ENCODE measurements at regions of chr12 and their contacts with region 1.

Region 1: GRCh38 chr12:12736759-12737676 is 19.9 kb downstream of the CDKN1B start:
- DNase-seq: peak; percentile 55
- H3K4me3 Mint-ChIP-seq: no peak overlapping the region
- H3K27ac Mint-ChIP-seq: peak overlapping the region; percentile 71
- H3K4me1 Mint-ChIP-seq: peaks cover 24% of the 10 kb centered on the region
- H3K27me3 Mint-ChIP-seq: no peaks in the 10 kb centered on the region
- CTCF ChIP-seq: peak; percentile 52

Region 2: DNA sequence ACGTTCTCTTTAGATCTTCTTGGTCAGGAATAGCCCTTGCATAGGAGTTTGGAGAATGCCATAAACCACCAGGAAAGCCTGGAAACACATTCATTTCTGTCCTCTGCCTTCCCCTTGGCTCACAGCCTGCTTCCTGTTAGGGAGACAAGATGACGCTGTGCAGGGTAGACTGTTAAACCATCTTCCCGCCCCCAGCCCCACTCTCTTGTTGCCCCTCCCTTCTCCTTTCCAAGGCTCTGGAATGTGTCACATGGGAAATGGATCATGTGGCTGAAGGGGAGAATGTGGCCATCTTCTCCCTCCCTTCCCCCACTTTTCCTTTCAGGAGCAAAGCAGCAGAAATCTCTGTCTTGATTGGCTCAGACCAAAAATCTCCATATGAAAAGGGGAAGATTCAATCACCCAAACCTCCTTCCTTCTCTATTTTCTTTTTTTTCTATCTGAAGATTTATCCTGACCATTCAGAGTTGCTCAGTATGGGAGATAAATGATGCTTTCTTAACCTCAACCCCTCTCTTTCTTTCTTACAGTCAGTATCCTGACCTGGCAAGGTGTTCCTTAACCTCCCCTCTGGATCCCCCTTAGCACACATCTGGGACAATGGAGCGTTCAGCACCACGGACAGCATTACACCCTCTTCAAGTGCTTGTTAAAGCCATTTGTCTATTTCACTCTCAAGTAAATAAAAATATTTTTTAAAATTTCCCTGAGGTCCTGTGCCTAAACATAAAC is 52.5 kb before region 1 on chr12:
- CTCF ChIA-PET with region 1: no interaction called
- POLR2A ChIA-PET with region 1: no interaction called
- intact Hi-C with region 1: no loop called
- DNase-seq: peak; percentile 59
- H3K4me3 Mint-ChIP-seq: no peak overlapping the region
- H3K27ac Mint-ChIP-seq: no peak overlapping the region
- H3K4me1 Mint-ChIP-seq: no peaks in the 10 kb centered on the region
- H3K27me3 Mint-ChIP-seq: no peaks in the 10 kb centered on the region
- CTCF ChIP-seq: no peak

Region 3: GRCh38 chr12:12749433-12749832 is 12.4 kb after region 1 on chr12:
- CTCF ChIA-PET with region 1: interaction called, 42 read pairs
- POLR2A ChIA-PET with region 1: interaction called, 3 read pairs
- intact Hi-C with region 1: no loop called
- DNase-seq: no peak
- H3K4me3 Mint-ChIP-seq: no peak overlapping the region
- H3K27ac Mint-ChIP-seq: no peak overlapping the region
- H3K4me1 Mint-ChIP-seq: peaks cover 11% of the 10 kb centered on the region
- H3K27me3 Mint-ChIP-seq: no peaks in the 10 kb centered on the region
- CTCF ChIP-seq: no peak

Region 4: GRCh38 chr12:12757121-12757520 is 20.1 kb after region 1 on chr12:
- CTCF ChIA-PET with region 1: interaction called, 13 read pairs
- POLR2A ChIA-PET with region 1: interaction called, 4 read pairs
- intact Hi-C with region 1: no loop called
- DNase-seq: no peak
- H3K4me3 Mint-ChIP-seq: no peak overlapping the region
- H3K27ac Mint-ChIP-seq: no peak overlapping the region
- H3K4me1 Mint-ChIP-seq: peaks cover 13% of the 10 kb centered on the region
- H3K27me3 Mint-ChIP-seq: no peaks in the 10 kb centered on the region
- CTCF ChIP-seq: no peak